ENCODE measurements at regions of chr16 and their contacts with region 1.

Region 1: DNA sequence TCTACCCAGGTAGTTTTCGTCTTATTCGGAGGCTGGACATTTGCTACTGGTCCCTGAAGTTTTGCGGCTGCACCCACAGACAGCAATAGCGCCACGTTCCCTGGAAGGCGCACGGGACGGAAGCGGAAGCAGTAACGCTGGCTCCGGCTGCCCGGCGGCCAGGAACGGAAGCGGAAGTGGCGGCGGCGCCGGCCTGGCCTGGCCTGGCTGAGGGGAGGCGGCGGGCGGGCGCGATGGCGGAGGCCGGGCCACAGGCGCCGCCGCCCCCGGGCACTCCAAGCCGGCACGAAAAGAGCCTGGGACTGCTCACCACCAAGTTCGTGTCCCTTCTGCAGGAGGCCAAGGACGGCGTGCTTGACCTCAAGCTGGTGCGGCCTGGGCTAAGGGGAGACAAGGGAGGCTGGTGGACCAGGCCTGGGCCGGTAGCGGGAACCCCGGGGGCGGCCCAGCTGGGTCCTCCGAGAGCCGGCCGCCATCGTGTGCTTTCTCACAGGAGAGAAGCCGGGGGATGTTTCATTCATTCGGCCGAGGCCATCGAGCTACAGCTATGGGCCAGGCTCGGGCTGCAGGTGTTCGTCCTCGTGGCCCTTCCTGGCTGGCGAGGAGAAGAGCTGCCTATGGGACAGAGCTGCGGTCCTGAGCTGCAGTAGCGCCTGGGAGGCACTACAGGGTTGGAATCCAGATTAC is at the start of gene E2F4:
- DNase-seq: peak; percentile 96
- total RNA-seq, gene E2F4: 34.4 TPM

Region 2: GRCh38 chr16:67159593-67160406 is 32.3 kb before region 1 on chr16 and contains the starts of genes FBXL8 and TRADD:
- intact Hi-C with region 1: no loop called
- DNase-seq: peak; percentile 92
- total RNA-seq, gene FBXL8: 9.5 TPM
- total RNA-seq, gene TRADD: 11.0 TPM

Region 3: DNA sequence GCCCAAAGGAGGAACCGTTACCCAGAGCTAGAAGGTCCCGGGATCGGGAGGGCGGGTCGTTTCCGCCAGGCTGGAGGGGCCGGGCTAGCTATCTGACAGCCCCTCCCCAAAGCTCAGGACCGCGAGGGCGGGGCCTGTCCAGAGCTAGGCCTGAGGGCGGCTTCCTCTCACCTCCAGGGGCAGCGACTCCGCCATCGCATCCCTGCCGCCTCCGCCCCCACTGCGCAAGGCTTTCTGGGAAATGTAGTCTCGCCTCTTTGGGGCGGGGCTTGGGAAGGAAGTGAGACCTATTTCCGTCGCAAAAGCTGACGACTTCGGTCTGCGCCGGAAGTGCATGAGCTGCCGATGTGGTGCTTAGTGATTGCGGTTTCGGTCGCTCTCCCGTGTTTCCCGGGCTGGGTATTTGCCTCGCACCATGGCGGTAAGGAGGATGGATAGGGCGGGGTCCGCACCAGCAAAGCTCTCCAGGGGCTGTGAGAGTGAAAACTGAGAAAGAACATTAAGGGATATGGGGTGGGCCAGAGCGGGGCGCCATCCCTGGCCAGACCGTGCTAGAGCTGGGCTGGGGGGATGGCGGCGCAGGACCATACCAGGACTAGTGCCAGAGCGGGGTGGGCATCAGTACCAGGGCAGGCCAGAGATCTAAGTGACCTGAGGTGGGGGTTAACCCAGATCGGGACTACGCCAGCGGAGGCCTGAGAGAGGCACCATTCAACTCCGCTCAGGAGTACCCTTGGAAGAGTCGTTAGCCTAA is 34.8 kb after region 1 on chr16 and contains the start of gene TMEM208:
- intact Hi-C with region 1: loop called (anchors 1 kb)
- DNase-seq: peak; percentile 99
- total RNA-seq, gene TMEM208: 16.3 TPM